Psoas muscle (tissue), 8 donors: ENCODE measurements at regions of chr3 and their contacts with region 1.

Region 1: GRCh38 chr3:118973050-118973449 is 61.6 kb downstream of the IGSF11 start:
- DNase-seq: no peak
- ATAC-seq: peak in 2 of 4 donors; percentile 42 to 55
- H3K4me3 ChIP-seq: no peak overlapping the region
- H3K27ac ChIP-seq: no peak overlapping the region
- H3K4me1 ChIP-seq: peaks cover 36% of the 10 kb centered on the region
- H3K27me3 ChIP-seq: no peaks in the 10 kb centered on the region
- CTCF ChIP-seq: no peak

Region 2: GRCh38 chr3:118742760-118743159 is 230.3 kb before region 1 on chr3:
- intact Hi-C with region 1: no loop called
- DNase-seq: no peak
- ATAC-seq: no peak
- H3K4me3 ChIP-seq: no peak overlapping the region
- H3K27ac ChIP-seq: no peak overlapping the region
- H3K4me1 ChIP-seq: no peaks in the 10 kb centered on the region
- H3K27me3 ChIP-seq: no peaks in the 10 kb centered on the region
- CTCF ChIP-seq: no peak

Region 3: GRCh38 chr3:118938183-118938961 is 34.7 kb before region 1 on chr3:
- intact Hi-C with region 1: loop called in 1 of 2 experiments (anchors 5 kb)
- DNase-seq: no peak
- ATAC-seq: peak in 1 of 4 donors; percentile 17
- H3K4me3 ChIP-seq: no peak overlapping the region
- H3K27ac ChIP-seq: no peak overlapping the region
- H3K4me1 ChIP-seq: peaks cover 51% of the 10 kb centered on the region
- H3K27me3 ChIP-seq: no peaks in the 10 kb centered on the region
- CTCF ChIP-seq: no peak